GM12878 (cell line): ENCODE measurements at regions of chr2 and their contacts with region 1.

Region 1: DNA sequence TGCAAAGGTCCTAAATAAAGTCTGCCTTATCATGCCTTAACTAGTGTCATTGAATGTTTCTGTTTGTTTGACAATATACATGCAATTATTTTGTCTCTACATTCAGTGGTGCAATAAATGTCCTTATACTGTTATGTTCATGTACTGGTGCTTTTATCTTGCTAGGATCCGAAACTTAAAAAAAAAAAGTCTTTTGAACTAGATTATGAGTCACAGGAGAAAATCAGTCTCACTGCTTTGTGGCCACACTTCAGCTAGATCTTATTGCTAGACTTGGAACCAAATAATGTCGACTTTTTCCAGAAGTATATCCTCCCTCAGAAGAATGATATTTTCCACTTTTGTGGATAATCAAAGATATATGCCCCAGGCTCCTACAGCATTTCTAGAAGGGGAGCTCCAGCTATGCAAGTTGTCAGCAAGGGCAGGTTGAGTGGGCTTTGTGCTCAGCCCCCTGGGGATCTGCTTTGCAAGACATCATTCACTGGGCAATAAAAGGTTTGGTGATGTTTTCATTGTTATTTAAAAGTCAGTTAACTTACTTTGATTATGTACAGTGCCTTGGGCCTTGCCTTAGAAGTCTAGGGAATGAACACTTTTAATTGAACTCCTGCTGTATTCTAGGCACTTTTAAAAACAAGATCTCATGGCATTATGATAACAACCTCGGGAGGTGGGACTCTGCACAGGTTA is 157.1 kb upstream of the LRRTM1 start:
- DNase-seq: no peak
- ATAC-seq: peak; percentile 61
- H3K4me3 ChIP-seq: no peak overlapping the region; the same call in 1 of the 2 replicates
- H3K27ac ChIP-seq: 0 out of 2 replicates have a peak overlapping the region, but pooled peaks have one; percentile 4
- H3K4me1 ChIP-seq: peaks cover 3% of the 10 kb centered on the region; the same call in 1 of the 2 replicates
- H3K27me3 ChIP-seq: no peaks in the 10 kb centered on the region; a peak in 1 of 4 replicates
- CTCF ChIP-seq: no peak
- EP300 ChIP-seq: no peak
- POLR2A ChIP-seq: no peak
- RAD21 ChIP-seq: no peak

Region 2: DNA sequence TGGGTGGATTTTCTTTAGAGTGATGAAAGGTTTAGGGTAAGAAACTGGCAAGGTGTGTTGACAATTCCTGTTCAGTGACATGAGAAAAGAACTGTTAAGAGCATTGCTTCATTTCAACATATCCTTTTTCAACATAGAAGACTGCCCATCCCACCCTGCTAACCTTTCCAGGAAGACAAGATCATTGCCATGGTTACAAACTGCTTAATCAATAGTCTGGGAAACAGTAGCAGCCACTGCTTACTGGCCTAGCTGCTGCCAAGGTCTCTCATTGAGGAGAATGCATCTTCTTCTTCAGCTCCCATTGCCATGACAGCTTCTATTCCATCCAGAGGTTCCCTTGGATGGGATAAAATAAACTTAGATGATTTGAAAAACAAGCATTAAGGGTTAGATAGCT is 369.2 kb before region 1 on chr2:
- CTCF ChIA-PET with region 1: no interaction called
- POLR2A ChIA-PET with region 1: no interaction called
- RAD21 ChIA-PET with region 1: no interaction called
- SMC1A ChIA-PET with region 1: no interaction called
- in situ Hi-C with region 1: no loop called
- intact Hi-C with region 1: no loop called
- DNase-seq: no peak
- ATAC-seq: no peak
- H3K4me3 ChIP-seq: no peak overlapping the region
- H3K27ac ChIP-seq: no peak overlapping the region
- H3K4me1 ChIP-seq: no peaks in the 10 kb centered on the region
- H3K27me3 ChIP-seq: no peaks in the 10 kb centered on the region; a peak in 1 of 4 replicates
- CTCF ChIP-seq: no peak
- EP300 ChIP-seq: no peak
- POLR2A ChIP-seq: no peak
- RAD21 ChIP-seq: no peak

Region 3: GRCh38 chr2:80105015-80105640 is 356.5 kb before region 1 on chr2:
- CTCF ChIA-PET with region 1: no interaction called
- POLR2A ChIA-PET with region 1: no interaction called
- RAD21 ChIA-PET with region 1: no interaction called
- SMC1A ChIA-PET with region 1: no interaction called
- in situ Hi-C with region 1: no loop called
- intact Hi-C with region 1: no loop called
- DNase-seq: no peak
- ATAC-seq: no peak
- H3K4me3 ChIP-seq: no peak overlapping the region
- H3K27ac ChIP-seq: no peak overlapping the region
- H3K4me1 ChIP-seq: no peaks in the 10 kb centered on the region
- H3K27me3 ChIP-seq: no peaks in the 10 kb centered on the region
- CTCF ChIP-seq: no peak
- EP300 ChIP-seq: no peak
- POLR2A ChIP-seq: no peak
- RAD21 ChIP-seq: no peak

Region 4: DNA sequence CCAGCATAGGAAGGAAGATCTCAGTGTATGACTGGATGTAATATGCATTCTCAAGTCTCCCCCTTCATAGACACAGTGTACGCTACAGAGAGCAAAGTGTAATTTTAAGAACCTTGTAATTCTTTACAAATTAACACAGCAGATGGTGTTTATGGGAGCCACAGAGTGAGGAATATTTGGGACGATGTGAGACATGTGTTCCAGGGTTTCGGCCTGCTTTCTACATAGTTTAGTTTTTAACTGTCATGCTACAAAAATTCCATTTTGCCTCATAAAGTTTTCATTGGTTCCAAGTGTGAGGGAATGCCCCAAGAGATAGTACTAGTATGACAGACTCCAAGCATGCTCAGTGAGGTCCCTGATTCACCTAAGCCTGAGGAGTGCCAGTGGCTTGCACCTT is 80.9 kb before region 1 on chr2:
- CTCF ChIA-PET with region 1: no interaction called
- POLR2A ChIA-PET with region 1: no interaction called
- RAD21 ChIA-PET with region 1: no interaction called
- SMC1A ChIA-PET with region 1: no interaction called
- in situ Hi-C with region 1: no loop called
- intact Hi-C with region 1: no loop called
- DNase-seq: no peak
- ATAC-seq: no peak; the same call in 2 of the 3 replicates
- H3K4me3 ChIP-seq: no peak overlapping the region
- H3K27ac ChIP-seq: no peak overlapping the region
- H3K4me1 ChIP-seq: no peaks in the 10 kb centered on the region
- H3K27me3 ChIP-seq: no peaks in the 10 kb centered on the region
- CTCF ChIP-seq: no peak
- EP300 ChIP-seq: no peak
- POLR2A ChIP-seq: no peak
- RAD21 ChIP-seq: no peak

Region 5: GRCh38 chr2:80473796-80474195 is 12.1 kb after region 1 on chr2:
- CTCF ChIA-PET with region 1: interaction called, 34 read pairs
- POLR2A ChIA-PET with region 1: interaction called, 141 read pairs
- RAD21 ChIA-PET with region 1: interaction called, 284 read pairs
- SMC1A ChIA-PET with region 1: interaction called, 510 read pairs
- in situ Hi-C with region 1: no loop called
- intact Hi-C with region 1: no loop called
- DNase-seq: no peak
- ATAC-seq: 0 out of 3 replicates have a peak, but pooled peaks have one; percentile 11
- H3K4me3 ChIP-seq: no peak overlapping the region
- H3K27ac ChIP-seq: no peak overlapping the region; the same call in 1 of the 2 replicates
- H3K4me1 ChIP-seq: peaks cover 8% of the 10 kb centered on the region
- H3K27me3 ChIP-seq: no peaks in the 10 kb centered on the region
- CTCF ChIP-seq: no peak
- EP300 ChIP-seq: no peak
- POLR2A ChIP-seq: no peak
- RAD21 ChIP-seq: no peak

Region 6: DNA sequence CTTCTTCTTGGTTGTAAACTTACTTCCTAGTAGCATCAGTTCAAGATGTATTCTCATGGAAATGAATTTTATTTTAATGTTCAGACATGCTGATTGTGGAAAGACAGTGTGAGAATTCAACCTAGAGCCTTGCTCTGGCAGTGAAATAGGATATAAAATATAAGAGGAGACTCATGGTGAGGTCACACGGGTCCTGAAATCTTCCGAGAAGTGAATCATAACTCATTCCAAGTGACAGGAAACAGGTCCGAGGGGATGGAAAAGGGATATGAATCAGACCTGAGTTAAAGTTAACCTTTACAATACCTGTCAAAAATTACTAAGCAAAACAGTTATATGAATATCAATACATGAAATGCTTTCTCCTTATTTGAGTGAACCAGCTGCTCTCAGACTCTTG is 28.1 kb after region 1 on chr2:
- CTCF ChIA-PET with region 1: interaction called, 228 read pairs
- POLR2A ChIA-PET with region 1: interaction called, 319 read pairs
- RAD21 ChIA-PET with region 1: interaction called, 556 read pairs
- SMC1A ChIA-PET with region 1: interaction called, 559 read pairs
- in situ Hi-C with region 1: no loop called
- intact Hi-C with region 1: no loop called
- DNase-seq: no peak
- ATAC-seq: no peak
- H3K4me3 ChIP-seq: no peak overlapping the region
- H3K27ac ChIP-seq: no peak overlapping the region
- H3K4me1 ChIP-seq: no peaks in the 10 kb centered on the region
- H3K27me3 ChIP-seq: no peaks in the 10 kb centered on the region
- CTCF ChIP-seq: no peak
- EP300 ChIP-seq: no peak
- POLR2A ChIP-seq: no peak
- RAD21 ChIP-seq: no peak

Region 7: DNA sequence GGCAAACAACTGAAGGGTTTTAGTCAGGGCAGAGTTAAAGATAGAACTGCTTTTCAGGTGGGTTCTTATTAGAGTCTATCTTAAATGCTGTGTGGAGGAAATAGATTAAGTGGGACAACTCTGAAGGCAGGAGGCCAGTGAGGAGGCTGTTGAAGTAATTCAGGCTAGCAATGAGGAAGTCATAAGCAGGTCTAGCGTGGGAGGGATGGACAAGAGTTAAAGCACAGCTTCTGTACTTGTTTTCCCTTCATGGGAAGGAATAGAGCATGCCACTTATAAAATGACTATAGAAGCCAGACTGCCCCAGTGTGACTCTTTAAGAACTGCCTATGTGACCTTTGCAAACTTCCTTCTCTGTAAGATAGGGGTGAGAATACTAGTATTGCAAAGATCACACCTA is 44.9 kb after region 1 on chr2:
- CTCF ChIA-PET with region 1: interaction called, 228 read pairs
- POLR2A ChIA-PET with region 1: interaction called, 319 read pairs
- RAD21 ChIA-PET with region 1: interaction called, 556 read pairs
- SMC1A ChIA-PET with region 1: interaction called, 559 read pairs
- in situ Hi-C with region 1: no loop called
- intact Hi-C with region 1: no loop called
- DNase-seq: no peak
- ATAC-seq: peak; percentile 62
- H3K4me3 ChIP-seq: no peak overlapping the region
- H3K27ac ChIP-seq: no peak overlapping the region
- H3K4me1 ChIP-seq: no peaks in the 10 kb centered on the region
- H3K27me3 ChIP-seq: no peaks in the 10 kb centered on the region
- CTCF ChIP-seq: no peak
- EP300 ChIP-seq: no peak
- POLR2A ChIP-seq: no peak
- RAD21 ChIP-seq: no peak